ENCODE measurements at regions of chr3 and their contacts with region 1.

Region 1: GRCh38 chr3:197959898-197960693 is at the start of gene LMLN:
- DNase-seq: peak; percentile 94 to 96 (median 95)
- H3K4me3 ChIP-seq: peak within 1 kb of the TSS; percentile 67 to 86
- H3K4me3 Mint-ChIP-seq: peak within 1 kb of the TSS; percentile 88 to 95 (median 91)
- H3K27ac ChIP-seq: peak within 1 kb of the TSS; percentile 78
- H3K27ac Mint-ChIP-seq: peak within 1 kb of the TSS; percentile 94 to 98 (median 97)
- H3K4me1 ChIP-seq: peaks cover 40% of the 10 kb centered on the region
- H3K4me1 Mint-ChIP-seq: peaks cover 26 to 57% (median 41%) of the 10 kb centered on the region in 4 donors
- H3K27me3 ChIP-seq: no peaks in the 10 kb centered on the region
- H3K27me3 Mint-ChIP-seq: no peaks in the 10 kb centered on the region
- total RNA-seq, gene LMLN: 5.9 to 6.5 TPM

Region 2: DNA sequence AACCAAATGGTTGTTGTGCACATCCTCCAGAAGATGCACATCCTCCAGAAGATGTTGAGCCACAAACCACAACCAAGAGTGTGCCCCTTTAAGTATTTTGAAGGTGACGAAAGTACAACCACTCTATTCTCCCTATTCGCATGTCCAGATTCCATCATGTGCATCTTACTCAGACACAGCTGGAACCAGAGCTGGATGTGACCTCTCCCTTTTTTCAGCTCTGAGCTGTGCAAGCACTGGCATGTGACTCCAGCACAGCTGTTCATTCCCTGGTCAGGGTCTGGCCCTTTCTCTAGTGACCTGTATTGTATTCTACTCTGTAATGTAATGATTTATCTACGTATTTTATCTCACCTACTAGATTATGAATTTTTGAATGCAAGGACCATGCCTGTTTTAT is 632.4 kb before region 1 on chr3:
- CTCF ChIA-PET with region 1: no interaction called
- POLR2A ChIA-PET with region 1: no interaction called
- intact Hi-C with region 1: no loop called
- DNase-seq: no peak
- H3K4me3 ChIP-seq: no peak overlapping the region
- H3K4me3 Mint-ChIP-seq: no peak overlapping the region
- H3K27ac ChIP-seq: no peak overlapping the region
- H3K27ac Mint-ChIP-seq: no peak overlapping the region
- H3K4me1 ChIP-seq: no peaks in the 10 kb centered on the region
- H3K4me1 Mint-ChIP-seq: no peaks in the 10 kb centered on the region
- H3K27me3 ChIP-seq: no peaks in the 10 kb centered on the region
- H3K27me3 Mint-ChIP-seq: peaks cover 10 to 26% of the 10 kb centered on the region in 2 donors

Region 3: DNA sequence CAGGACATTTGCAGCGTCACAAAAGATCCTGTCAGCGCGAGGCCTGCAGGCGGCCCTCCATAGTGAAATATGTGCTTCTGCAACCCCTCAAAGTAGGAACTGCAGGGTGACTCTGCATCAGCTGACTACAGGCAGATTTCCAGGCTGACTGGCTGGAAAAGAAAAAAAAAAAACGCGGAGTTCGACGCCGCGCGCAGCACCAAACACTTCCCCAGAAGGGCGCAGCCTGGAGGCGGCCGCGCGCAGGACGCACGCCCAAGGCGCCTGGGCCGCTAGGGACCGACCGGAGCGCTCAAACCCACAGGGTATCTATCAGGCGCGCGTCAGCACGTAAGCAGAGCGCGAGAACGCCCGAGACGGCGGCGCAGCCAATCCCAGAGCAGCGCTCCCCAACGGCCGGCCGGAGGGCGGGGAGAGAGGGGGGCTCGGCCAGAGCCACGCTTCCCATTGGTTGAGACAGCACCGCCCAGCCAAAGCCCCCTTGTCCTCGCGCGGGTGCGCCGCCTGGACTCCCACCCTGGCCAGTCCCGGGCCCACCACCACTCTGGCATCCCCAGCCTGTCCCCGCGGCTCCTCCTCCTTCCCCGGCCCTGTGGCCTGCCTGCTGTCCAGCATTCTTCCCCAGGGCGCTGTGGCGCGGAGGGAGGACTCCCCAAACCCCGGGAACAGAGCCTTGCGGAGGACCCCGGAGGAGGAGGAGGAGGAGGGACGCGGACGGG is 405.4 kb before region 1 on chr3:
- CTCF ChIA-PET with region 1: no interaction called
- POLR2A ChIA-PET with region 1: no interaction called
- intact Hi-C with region 1: loop called (anchors 10 kb)
- DNase-seq: peak; percentile 82 to 89 (median 87)
- H3K4me3 ChIP-seq: peak overlapping the region; percentile 71 to 84
- H3K4me3 Mint-ChIP-seq: peak overlapping the region; percentile 90 to 95 (median 93)
- H3K27ac ChIP-seq: peak overlapping the region; percentile 74
- H3K27ac Mint-ChIP-seq: peak overlapping the region; percentile 71 to 95 (median 88)
- H3K4me1 ChIP-seq: peaks cover 14% of the 10 kb centered on the region
- H3K4me1 Mint-ChIP-seq: peaks cover 9 to 19% (median 15%) of the 10 kb centered on the region in 4 donors
- H3K27me3 ChIP-seq: no peaks in the 10 kb centered on the region
- H3K27me3 Mint-ChIP-seq: peaks cover 4 to 6% of the 10 kb centered on the region in 2 donors

Region 4: GRCh38 chr3:197949754-197950660 is 10.1 kb before region 1 on chr3 and contains the start of gene RPL35A:
- CTCF ChIA-PET with region 1: no interaction called
- POLR2A ChIA-PET with region 1: interaction called, 20 read pairs
- intact Hi-C with region 1: loop called (anchors 1 kb)
- DNase-seq: peak; percentile 91 to 95 (median 95)
- H3K4me3 ChIP-seq: peak within 1 kb of the TSS; percentile 59 to 80
- H3K4me3 Mint-ChIP-seq: peak within 1 kb of the TSS; percentile 96 to 100 (median 98)
- H3K27ac ChIP-seq: peak within 1 kb of the TSS; percentile 88
- H3K27ac Mint-ChIP-seq: peak within 1 kb of the TSS; percentile 96 to 100 (median 98)
- H3K4me1 ChIP-seq: peaks cover 46% of the 10 kb centered on the region
- H3K4me1 Mint-ChIP-seq: peaks cover 19 to 55% (median 31%) of the 10 kb centered on the region in 4 donors
- H3K27me3 ChIP-seq: no peaks in the 10 kb centered on the region
- H3K27me3 Mint-ChIP-seq: no peaks in the 10 kb centered on the region
- total RNA-seq, gene RPL35A: 1,716 to 1,772 TPM

Region 5: GRCh38 chr3:198043119-198043518 is 83.0 kb after region 1 on chr3:
- CTCF ChIA-PET with region 1: no interaction called
- POLR2A ChIA-PET with region 1: no interaction called
- intact Hi-C with region 1: no loop called
- DNase-seq: no peak
- H3K4me3 ChIP-seq: no peak overlapping the region
- H3K4me3 Mint-ChIP-seq: no peak overlapping the region
- H3K27ac ChIP-seq: no peak overlapping the region
- H3K27ac Mint-ChIP-seq: no peak overlapping the region
- H3K4me1 ChIP-seq: no peaks in the 10 kb centered on the region
- H3K4me1 Mint-ChIP-seq: no peaks in the 10 kb centered on the region
- H3K27me3 ChIP-seq: no peaks in the 10 kb centered on the region
- H3K27me3 Mint-ChIP-seq: no peaks in the 10 kb centered on the region

Region 6: GRCh38 chr3:198080521-198081280 is 120.6 kb after region 1 on chr3:
- CTCF ChIA-PET with region 1: no interaction called
- POLR2A ChIA-PET with region 1: no interaction called
- intact Hi-C with region 1: loop called (anchors 2 kb)
- DNase-seq: peak; percentile 78 to 84 (median 79)
- H3K4me3 ChIP-seq: peak overlapping the region; percentile 36 to 44
- H3K4me3 Mint-ChIP-seq: peak overlapping the region; percentile 69 to 81 (median 79)
- H3K27ac ChIP-seq: no peak overlapping the region
- H3K27ac Mint-ChIP-seq: peak overlapping the region in 3 of 7 donors; percentile 53 to 74 (median 56)
- H3K4me1 ChIP-seq: peaks cover 12% of the 10 kb centered on the region
- H3K4me1 Mint-ChIP-seq: peaks cover 0 to 6% (median 2%) of the 10 kb centered on the region in 4 donors
- H3K27me3 ChIP-seq: peaks cover 10% of the 10 kb centered on the region
- H3K27me3 Mint-ChIP-seq: peaks cover 19 to 24% of the 10 kb centered on the region in 2 donors